ENCODE measurements at regions of chr4 and their contacts with region 1.

Region 1: DNA sequence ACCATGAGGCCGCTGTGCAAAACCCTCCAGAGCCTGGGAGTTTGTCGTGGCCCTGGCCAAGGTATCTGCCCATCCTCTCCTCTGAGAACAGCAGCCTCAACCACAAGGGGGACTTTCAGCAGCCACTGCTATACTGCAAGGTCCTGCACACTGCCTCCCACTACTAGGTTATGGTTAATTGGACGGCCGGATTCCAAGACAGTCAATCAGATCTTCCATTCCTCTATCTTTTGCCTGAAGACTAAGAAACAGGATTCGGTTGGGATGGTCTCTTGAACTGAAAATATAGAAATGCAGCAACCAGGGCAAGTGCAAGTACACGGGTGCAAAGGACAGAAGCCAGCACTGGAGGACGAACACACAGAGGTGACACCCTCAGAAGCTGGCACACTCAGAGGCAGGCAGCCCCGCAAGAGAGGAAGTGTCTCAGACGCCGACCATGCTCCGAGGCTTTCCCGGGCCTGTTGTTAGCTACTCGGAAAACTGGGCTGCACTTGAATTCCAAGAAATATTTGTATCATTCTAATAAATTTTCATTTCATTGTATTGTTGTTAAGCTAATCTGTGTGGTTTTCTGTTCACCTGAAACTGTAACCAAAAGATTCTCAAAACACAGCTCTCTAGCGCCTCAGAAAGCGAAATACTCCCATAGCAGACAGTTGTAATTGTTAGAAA is 63.3 kb downstream of the AFAP1 start:
- DNase-seq: peak; percentile 30 to 45 (median 36)
- H3K4me3 ChIP-seq: peak overlapping the region in 1 of 2 donors; percentile 33
- H3K4me3 Mint-ChIP-seq: peak overlapping the region; percentile 61 to 94 (median 82)
- H3K27ac ChIP-seq: peak overlapping the region; percentile 44
- H3K27ac Mint-ChIP-seq: peak overlapping the region; percentile 67 to 96 (median 91)
- H3K4me1 ChIP-seq: peaks cover 42% of the 10 kb centered on the region
- H3K4me1 Mint-ChIP-seq: peaks cover 38 to 67% (median 58%) of the 10 kb centered on the region in 4 donors
- H3K27me3 ChIP-seq: no peaks in the 10 kb centered on the region
- H3K27me3 Mint-ChIP-seq: no peaks in the 10 kb centered on the region

Region 2: DNA sequence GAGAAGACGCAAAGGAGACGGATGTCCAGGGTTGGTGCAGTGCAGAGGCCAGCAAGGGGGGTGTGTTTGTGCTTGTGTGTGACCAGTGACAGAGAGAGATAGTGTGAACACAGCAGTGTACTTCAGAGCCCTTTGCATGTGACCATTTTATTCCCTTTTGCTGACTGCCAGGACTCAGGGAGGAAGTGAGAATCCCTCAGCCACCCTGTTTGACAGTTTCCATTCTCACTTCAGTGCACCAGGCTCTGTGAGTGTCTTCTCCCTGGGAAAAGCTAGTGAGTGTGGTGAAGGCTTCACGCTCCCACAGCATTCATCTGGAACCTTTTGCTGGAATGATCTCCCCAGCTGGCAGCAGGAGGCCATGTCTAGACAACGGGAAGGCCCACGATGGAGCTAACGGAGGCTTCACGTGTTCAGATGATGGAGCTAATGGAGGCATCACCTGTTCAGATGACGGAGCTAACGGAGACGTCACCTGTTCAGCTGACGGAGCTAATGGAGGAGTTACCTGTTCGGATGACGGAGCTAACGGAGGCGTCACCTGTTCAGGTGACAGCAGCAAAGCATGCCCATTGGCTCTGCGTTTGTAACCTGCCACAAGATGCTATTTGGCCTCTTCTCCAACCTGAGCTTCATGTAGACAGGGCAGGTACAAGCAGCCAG is 132.1 kb before region 1 on chr4:
- CTCF ChIA-PET with region 1: no interaction called
- POLR2A ChIA-PET with region 1: no interaction called
- intact Hi-C with region 1: no loop called
- DNase-seq: no peak
- H3K4me3 ChIP-seq: no peak overlapping the region
- H3K4me3 Mint-ChIP-seq: no peak overlapping the region
- H3K27ac ChIP-seq: no peak overlapping the region
- H3K27ac Mint-ChIP-seq: no peak overlapping the region
- H3K4me1 ChIP-seq: no peaks in the 10 kb centered on the region
- H3K4me1 Mint-ChIP-seq: peaks cover 1 to 17% (median 4%) of the 10 kb centered on the region in 4 donors
- H3K27me3 ChIP-seq: no peaks in the 10 kb centered on the region
- H3K27me3 Mint-ChIP-seq: no peaks in the 10 kb centered on the region

Region 3: GRCh38 chr4:7843831-7844593 is 32.3 kb before region 1 on chr4:
- CTCF ChIA-PET with region 1: interaction called, 53 read pairs
- POLR2A ChIA-PET with region 1: interaction called, 4 read pairs
- intact Hi-C with region 1: loop called (anchors 1 kb)
- DNase-seq: peak; percentile 54 to 72 (median 58)
- H3K4me3 ChIP-seq: no peak overlapping the region
- H3K4me3 Mint-ChIP-seq: peak overlapping the region in 1 of 8 donors; percentile 29
- H3K27ac ChIP-seq: no peak overlapping the region
- H3K27ac Mint-ChIP-seq: peak overlapping the region in 6 of 7 donors; percentile 33 to 94 (median 74)
- H3K4me1 ChIP-seq: peaks cover 19% of the 10 kb centered on the region
- H3K4me1 Mint-ChIP-seq: peaks cover 20 to 41% (median 32%) of the 10 kb centered on the region in 4 donors
- H3K27me3 ChIP-seq: no peaks in the 10 kb centered on the region
- H3K27me3 Mint-ChIP-seq: no peaks in the 10 kb centered on the region

Region 4: DNA sequence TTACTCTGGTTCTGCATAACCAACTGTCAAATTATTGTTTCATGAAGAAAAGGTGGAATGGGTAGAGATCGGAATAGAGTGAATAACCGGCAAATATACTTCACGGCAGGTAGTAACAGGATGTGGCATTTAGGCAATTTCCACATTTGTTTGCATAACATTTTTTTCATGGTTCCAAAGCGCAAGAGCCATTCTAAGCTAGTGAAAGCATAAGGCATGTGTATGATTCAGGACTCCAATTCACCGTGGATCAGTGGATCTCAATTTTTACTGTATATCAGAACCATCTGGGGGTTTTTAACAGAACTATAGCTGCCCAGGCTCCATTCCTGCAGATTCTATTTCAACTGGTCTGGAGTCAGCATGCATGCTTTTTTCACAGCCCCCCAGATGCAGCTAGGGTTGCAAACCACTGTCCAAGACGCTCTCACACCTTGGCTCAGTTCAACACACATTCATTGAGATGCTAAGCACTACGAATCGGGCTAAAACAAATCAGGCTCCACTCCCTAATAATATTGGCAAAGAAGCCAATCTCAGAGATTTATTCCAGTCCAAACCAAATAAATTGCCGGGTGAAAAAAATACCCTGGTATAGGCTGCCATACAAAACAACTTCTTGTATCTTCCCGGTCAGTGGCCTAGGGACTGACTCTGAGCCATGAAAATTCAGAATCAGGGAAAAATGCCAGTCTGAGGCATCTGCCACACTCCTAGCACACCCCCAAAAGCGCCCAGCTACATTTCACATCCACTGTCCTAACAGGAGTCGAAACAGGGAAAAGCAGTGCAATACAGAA is 33.3 kb after region 1 on chr4:
- CTCF ChIA-PET with region 1: interaction called, 11 read pairs
- POLR2A ChIA-PET with region 1: no interaction called
- intact Hi-C with region 1: no loop called
- DNase-seq: peak in 1 of 5 donors; percentile 1
- H3K4me3 ChIP-seq: no peak overlapping the region
- H3K4me3 Mint-ChIP-seq: peak overlapping the region in 5 of 8 donors; percentile 1 to 68 (median 29)
- H3K27ac ChIP-seq: no peak overlapping the region
- H3K27ac Mint-ChIP-seq: peak overlapping the region in 3 of 7 donors; percentile 11 to 43 (median 18)
- H3K4me1 ChIP-seq: peaks cover 15% of the 10 kb centered on the region
- H3K4me1 Mint-ChIP-seq: peaks cover 22 to 61% (median 48%) of the 10 kb centered on the region in 4 donors
- H3K27me3 ChIP-seq: no peaks in the 10 kb centered on the region
- H3K27me3 Mint-ChIP-seq: no peaks in the 10 kb centered on the region

Region 5: GRCh38 chr4:7970394-7970902 is 94.1 kb after region 1 on chr4:
- CTCF ChIA-PET with region 1: interaction called, 3 read pairs
- POLR2A ChIA-PET with region 1: no interaction called
- intact Hi-C with region 1: loop called (anchors 2 kb)
- DNase-seq: no peak
- H3K4me3 ChIP-seq: peak overlapping the region; percentile 50 to 59
- H3K4me3 Mint-ChIP-seq: peak overlapping the region; percentile 92 to 99 (median 98)
- H3K27ac ChIP-seq: peak overlapping the region; percentile 67
- H3K27ac Mint-ChIP-seq: peak overlapping the region; percentile 91 to 98 (median 97)
- H3K4me1 ChIP-seq: peaks cover 66% of the 10 kb centered on the region
- H3K4me1 Mint-ChIP-seq: peaks cover 28 to 74% (median 56%) of the 10 kb centered on the region in 4 donors
- H3K27me3 ChIP-seq: no peaks in the 10 kb centered on the region
- H3K27me3 Mint-ChIP-seq: no peaks in the 10 kb centered on the region

Region 6: GRCh38 chr4:8015512-8015911 is 139.2 kb after region 1 on chr4:
- CTCF ChIA-PET with region 1: no interaction called
- POLR2A ChIA-PET with region 1: no interaction called
- intact Hi-C with region 1: no loop called
- DNase-seq: no peak
- H3K4me3 ChIP-seq: no peak overlapping the region
- H3K4me3 Mint-ChIP-seq: no peak overlapping the region
- H3K27ac ChIP-seq: no peak overlapping the region
- H3K27ac Mint-ChIP-seq: no peak overlapping the region
- H3K4me1 ChIP-seq: no peaks in the 10 kb centered on the region
- H3K4me1 Mint-ChIP-seq: peaks cover 0 to 2% (median 0%) of the 10 kb centered on the region in 4 donors
- H3K27me3 ChIP-seq: no peaks in the 10 kb centered on the region
- H3K27me3 Mint-ChIP-seq: no peaks in the 10 kb centered on the region